SK-N-SH (cell line): ENCODE measurements at regions of chr6 and their contacts with region 1.

Region 1: GRCh38 chr6:73515204-73515655 is 5.6 kb downstream of the EEF1A1 start:
- DNase-seq: no peak
- H3K4me3 ChIP-seq: no peak overlapping the region; a peak in 1 of 4 replicates
- H3K27ac ChIP-seq: peak overlapping the region; percentile 43 to 97
- H3K4me1 ChIP-seq: peaks cover 14 to 16% of the 10 kb centered on the region in 2 experiments; a peak in 3 of 4 replicates
- H3K27me3 ChIP-seq: no peaks in the 10 kb centered on the region
- CTCF ChIP-seq: no peak
- EP300 ChIP-seq: no peak
- RAD21 ChIP-seq: no peak

Region 2: GRCh38 chr6:73285674-73286283 is 229.5 kb before region 1 on chr6:
- CTCF ChIA-PET with region 1: no interaction called
- POLR2A ChIA-PET with region 1: no interaction called
- DNase-seq: peak; percentile 47
- H3K4me3 ChIP-seq: no peak overlapping the region
- H3K27ac ChIP-seq: no peak overlapping the region
- H3K4me1 ChIP-seq: no peaks in the 10 kb centered on the region
- H3K27me3 ChIP-seq: no peaks in the 10 kb centered on the region
- CTCF ChIP-seq: peak; percentile 72
- EP300 ChIP-seq: no peak
- RAD21 ChIP-seq: peak; percentile 54

Region 3: GRCh38 chr6:73418081-73418741 is 97.0 kb before region 1 on chr6:
- CTCF ChIA-PET with region 1: no interaction called
- POLR2A ChIA-PET with region 1: no interaction called
- DNase-seq: no peak
- H3K4me3 ChIP-seq: no peak overlapping the region
- H3K27ac ChIP-seq: no peak overlapping the region
- H3K4me1 ChIP-seq: no peaks in the 10 kb centered on the region
- H3K27me3 ChIP-seq: no peaks in the 10 kb centered on the region
- CTCF ChIP-seq: no peak
- EP300 ChIP-seq: no peak
- RAD21 ChIP-seq: no peak

Region 4: GRCh38 chr6:73503027-73503772 is 12.0 kb before region 1 on chr6:
- CTCF ChIA-PET with region 1: interaction called, 5 read pairs
- POLR2A ChIA-PET with region 1: interaction called, 11 read pairs
- DNase-seq: no peak
- H3K4me3 ChIP-seq: no peak overlapping the region
- H3K27ac ChIP-seq: no peak overlapping the region
- H3K4me1 ChIP-seq: no peaks in the 10 kb centered on the region
- H3K27me3 ChIP-seq: no peaks in the 10 kb centered on the region
- CTCF ChIP-seq: no peak
- EP300 ChIP-seq: no peak
- RAD21 ChIP-seq: no peak

Region 5: DNA sequence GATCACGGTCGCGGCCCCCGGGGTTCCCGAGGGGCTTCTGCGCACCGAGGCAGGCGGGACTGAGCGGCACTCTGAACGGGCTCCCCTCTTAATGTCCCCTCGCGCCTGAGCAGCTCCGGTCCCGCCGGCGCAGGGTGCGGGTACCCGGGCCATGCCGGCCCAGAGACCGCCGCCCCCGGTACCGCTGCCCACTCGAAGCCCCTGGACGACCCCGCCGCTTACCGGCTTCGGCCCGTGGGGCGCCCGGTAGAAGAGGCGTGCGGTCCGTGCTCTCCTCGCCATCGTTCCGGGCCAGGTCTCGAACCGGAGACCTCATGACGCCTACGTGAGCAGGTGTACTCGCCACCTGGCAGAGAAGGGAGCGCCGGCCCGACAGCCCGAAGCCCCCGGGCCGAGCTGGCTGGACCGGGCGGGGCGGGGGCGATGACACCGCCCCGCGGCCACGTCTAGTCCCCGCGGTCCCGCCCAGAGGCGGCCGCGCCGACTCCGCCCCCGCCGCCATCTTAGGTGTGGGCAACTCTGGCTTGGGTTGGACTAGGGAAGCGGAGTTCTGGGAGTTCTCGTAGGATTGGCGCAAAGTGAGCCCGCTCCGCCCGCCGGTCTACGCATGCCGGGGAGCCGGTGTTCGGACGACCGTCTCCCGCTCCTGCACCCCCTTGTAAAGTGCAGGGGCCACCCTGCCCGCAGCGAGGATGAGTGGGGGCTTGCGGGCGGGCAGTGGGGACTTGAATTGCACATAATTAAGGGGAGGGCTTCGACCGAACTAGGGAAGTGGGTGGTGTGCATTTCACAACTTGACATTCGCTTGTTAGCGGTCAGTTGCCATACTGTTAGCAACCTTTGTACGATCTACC is 138.6 kb after region 1 on chr6 and contains the start of gene SLC17A5:
- CTCF ChIA-PET with region 1: interaction called, 14 read pairs
- POLR2A ChIA-PET with region 1: interaction called, 8 read pairs
- DNase-seq: peak; percentile 95
- H3K4me3 ChIP-seq: peak within 1 kb of the TSS; percentile 86 to 92
- H3K27ac ChIP-seq: peak within 1 kb of the TSS; percentile 67 to 70
- H3K4me1 ChIP-seq: peaks cover 0 to 3% of the 10 kb centered on the region in 2 experiments; a peak in 2 of 4 replicates
- H3K27me3 ChIP-seq: no peaks in the 10 kb centered on the region
- CTCF ChIP-seq: no peak
- EP300 ChIP-seq: no peak
- RAD21 ChIP-seq: no peak
- polyA plus RNA-seq, gene SLC17A5: 9.2 and 14.0 TPM in 2 replicates

Region 6: DNA sequence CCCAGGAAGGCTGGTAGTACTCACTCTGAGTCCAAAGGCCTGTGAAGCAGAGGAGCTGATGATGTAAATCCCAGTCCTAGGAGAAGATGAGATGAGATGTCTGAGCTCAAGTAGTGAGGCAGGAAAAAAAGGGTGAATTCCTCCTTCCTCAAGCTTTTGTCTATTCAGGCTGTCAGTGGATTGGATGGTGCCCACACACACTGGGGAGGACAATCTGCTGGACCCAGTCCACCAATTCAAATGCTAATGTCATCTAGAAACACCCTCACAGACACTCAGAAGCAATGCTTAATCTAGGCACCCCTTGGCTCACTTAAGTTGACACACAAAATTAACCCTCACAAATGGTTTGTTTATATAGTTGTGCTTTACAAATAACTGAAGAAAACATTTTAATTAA is 275.3 kb after region 1 on chr6:
- CTCF ChIA-PET with region 1: no interaction called
- POLR2A ChIA-PET with region 1: no interaction called
- DNase-seq: no peak
- H3K4me3 ChIP-seq: no peak overlapping the region
- H3K27ac ChIP-seq: no peak overlapping the region
- H3K4me1 ChIP-seq: no peaks in the 10 kb centered on the region; a peak in 1 of 4 replicates
- H3K27me3 ChIP-seq: no peaks in the 10 kb centered on the region
- CTCF ChIP-seq: no peak
- EP300 ChIP-seq: no peak
- RAD21 ChIP-seq: no peak